Breast epithelium (tissue), 4 donors: ENCODE measurements at regions of chr14 and their contacts with region 1.

Region 1: GRCh38 chr14:96368534-96368933 is 5.2 kb downstream of the GSKIP start:
- DNase-seq: no peak
- H3K4me3 ChIP-seq: no peak overlapping the region
- H3K27ac ChIP-seq: no peak overlapping the region
- H3K4me1 ChIP-seq: peaks cover 0 to 8% of the 10 kb centered on the region in 2 donors
- H3K27me3 ChIP-seq: no peaks in the 10 kb centered on the region
- CTCF ChIP-seq: no peak
- POLR2A ChIP-seq: no peak

Region 2: DNA sequence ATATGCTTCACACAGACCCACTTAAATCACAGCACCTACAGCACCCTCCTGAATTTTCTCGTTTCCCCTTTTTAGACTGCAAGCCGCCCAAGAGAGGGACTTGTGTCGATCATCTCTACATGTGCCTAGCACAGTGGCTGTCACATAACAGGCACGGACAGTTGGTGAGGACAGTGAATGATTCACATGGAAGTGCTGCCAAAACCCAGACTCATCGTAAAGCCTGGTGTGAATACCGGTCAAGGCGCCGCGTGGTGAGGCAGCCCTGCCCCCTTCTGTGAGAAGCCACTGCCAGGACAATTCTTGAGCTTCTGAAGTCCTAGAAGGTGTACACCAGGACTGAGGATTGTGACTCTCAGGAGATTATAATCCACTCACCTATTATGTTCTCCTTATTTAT is 49.7 kb before region 1 on chr14:
- intact Hi-C with region 1: no loop called
- DNase-seq: no peak
- H3K4me3 ChIP-seq: no peak overlapping the region
- H3K27ac ChIP-seq: no peak overlapping the region
- H3K4me1 ChIP-seq: no peaks in the 10 kb centered on the region
- H3K27me3 ChIP-seq: no peaks in the 10 kb centered on the region
- CTCF ChIP-seq: no peak
- POLR2A ChIP-seq: no peak

Region 3: GRCh38 chr14:96424109-96424989 is 55.8 kb after region 1 on chr14:
- intact Hi-C with region 1: loop called (anchors 2 kb)
- DNase-seq: no peak
- H3K4me3 ChIP-seq: peak overlapping the region; percentile 34 to 64 (median 40)
- H3K27ac ChIP-seq: no peak overlapping the region
- H3K4me1 ChIP-seq: no peaks in the 10 kb centered on the region
- H3K27me3 ChIP-seq: no peaks in the 10 kb centered on the region
- CTCF ChIP-seq: peak; percentile 75 to 81 (median 78)
- POLR2A ChIP-seq: no peak

Region 4: GRCh38 chr14:96525452-96525851 is 156.9 kb after region 1 on chr14:
- intact Hi-C with region 1: no loop called
- DNase-seq: no peak
- H3K4me3 ChIP-seq: no peak overlapping the region
- H3K27ac ChIP-seq: no peak overlapping the region
- H3K4me1 ChIP-seq: no peaks in the 10 kb centered on the region
- H3K27me3 ChIP-seq: no peaks in the 10 kb centered on the region
- CTCF ChIP-seq: no peak
- POLR2A ChIP-seq: no peak